PC-9 (cell line): ENCODE measurements at regions of chr14 and their contacts with region 1.

Region 1: GRCh38 chr14:93042968-93043940 is 72.5 kb downstream of the ITPK1 start:
- DNase-seq: peak; percentile 91 to 98
- H3K4me3 ChIP-seq: peak overlapping the region; percentile 38; the same call in 1 of the 2 replicates
- H3K27ac ChIP-seq: peak overlapping the region; percentile 99
- H3K4me1 ChIP-seq: peaks cover 96% of the 10 kb centered on the region
- H3K27me3 ChIP-seq: no peaks in the 10 kb centered on the region
- CTCF ChIP-seq: no peak

Region 2: DNA sequence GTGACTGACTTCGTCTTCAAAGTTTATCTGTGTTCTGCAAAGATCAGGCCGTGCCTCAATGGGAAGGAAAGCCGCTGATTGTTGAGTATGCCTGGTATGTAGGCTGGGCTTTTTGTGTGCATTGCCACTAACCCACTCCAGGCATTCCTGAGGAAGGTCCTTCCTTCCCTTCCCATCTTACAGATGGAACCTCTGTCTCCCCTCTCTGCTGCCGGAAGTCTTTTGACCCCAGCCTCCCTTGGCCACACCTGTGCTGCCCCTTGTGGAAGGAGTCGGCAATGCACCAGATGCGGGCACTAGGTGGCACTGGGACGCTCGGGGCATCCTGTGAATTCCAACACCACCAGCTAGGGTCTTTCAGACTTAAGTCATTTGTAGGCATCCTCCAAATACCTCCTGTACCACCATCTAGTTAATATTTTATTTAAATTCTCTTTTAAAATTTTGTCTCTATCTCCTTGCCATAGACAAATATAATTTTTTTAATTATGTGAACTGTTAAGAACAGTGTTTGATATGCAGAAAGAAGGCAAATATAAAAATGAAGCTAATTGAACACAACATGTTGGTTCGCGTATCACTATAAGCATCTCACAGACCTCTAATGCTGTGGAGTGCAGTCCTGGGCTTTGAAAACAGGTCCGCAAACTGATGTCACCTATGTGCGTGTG is 430.1 kb before region 1 on chr14:
- CTCF ChIA-PET with region 1: no interaction called
- POLR2A ChIA-PET with region 1: no interaction called
- intact Hi-C with region 1: no loop called
- DNase-seq: no peak
- H3K4me3 ChIP-seq: no peak overlapping the region
- H3K27ac ChIP-seq: no peak overlapping the region
- H3K4me1 ChIP-seq: peaks cover 45% of the 10 kb centered on the region
- H3K27me3 ChIP-seq: no peaks in the 10 kb centered on the region
- CTCF ChIP-seq: peak; percentile 87

Region 3: DNA sequence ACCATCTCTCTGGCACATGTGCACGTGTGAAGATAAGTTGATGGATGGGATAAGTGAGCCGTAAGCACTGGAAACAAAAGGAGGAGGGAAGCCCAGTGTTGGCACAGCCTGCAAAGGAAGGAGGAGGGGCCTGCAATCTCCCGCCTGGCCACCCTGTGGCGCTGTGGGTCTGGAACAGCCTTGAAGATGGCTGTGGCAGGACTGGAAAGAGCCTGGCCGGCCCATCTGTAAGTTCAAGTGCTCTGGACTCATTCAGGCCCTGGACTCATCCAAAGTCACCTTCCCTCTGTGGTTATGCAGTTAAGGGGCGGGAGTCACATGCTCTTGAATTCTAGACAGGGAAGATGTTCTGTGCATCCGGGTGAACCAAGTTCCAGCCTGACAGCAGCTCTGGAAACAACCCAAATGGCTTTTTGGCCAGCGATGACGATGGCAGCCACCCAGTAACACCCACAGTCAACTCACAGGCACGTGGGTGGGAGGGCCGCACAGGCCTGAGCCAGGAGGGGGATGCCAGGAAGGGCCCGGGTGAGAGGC is 69.9 kb before region 1 on chr14:
- CTCF ChIA-PET with region 1: no interaction called
- POLR2A ChIA-PET with region 1: no interaction called
- intact Hi-C with region 1: loop called (anchors 2 kb)
- DNase-seq: peak; percentile 52 to 75
- H3K4me3 ChIP-seq: no peak overlapping the region
- H3K27ac ChIP-seq: no peak overlapping the region
- H3K4me1 ChIP-seq: no peaks in the 10 kb centered on the region
- H3K27me3 ChIP-seq: no peaks in the 10 kb centered on the region
- CTCF ChIP-seq: peak; percentile 90

Region 4: GRCh38 chr14:93072674-93073357 is 29.6 kb after region 1 on chr14:
- CTCF ChIA-PET with region 1: interaction called, 3 read pairs
- POLR2A ChIA-PET with region 1: interaction called, 3 read pairs
- intact Hi-C with region 1: loop called (anchors 1 kb)
- DNase-seq: peak; percentile 45 to 58
- H3K4me3 ChIP-seq: no peak overlapping the region
- H3K27ac ChIP-seq: no peak overlapping the region
- H3K4me1 ChIP-seq: peaks cover 17% of the 10 kb centered on the region
- H3K27me3 ChIP-seq: no peaks in the 10 kb centered on the region
- CTCF ChIP-seq: no peak

Region 5: DNA sequence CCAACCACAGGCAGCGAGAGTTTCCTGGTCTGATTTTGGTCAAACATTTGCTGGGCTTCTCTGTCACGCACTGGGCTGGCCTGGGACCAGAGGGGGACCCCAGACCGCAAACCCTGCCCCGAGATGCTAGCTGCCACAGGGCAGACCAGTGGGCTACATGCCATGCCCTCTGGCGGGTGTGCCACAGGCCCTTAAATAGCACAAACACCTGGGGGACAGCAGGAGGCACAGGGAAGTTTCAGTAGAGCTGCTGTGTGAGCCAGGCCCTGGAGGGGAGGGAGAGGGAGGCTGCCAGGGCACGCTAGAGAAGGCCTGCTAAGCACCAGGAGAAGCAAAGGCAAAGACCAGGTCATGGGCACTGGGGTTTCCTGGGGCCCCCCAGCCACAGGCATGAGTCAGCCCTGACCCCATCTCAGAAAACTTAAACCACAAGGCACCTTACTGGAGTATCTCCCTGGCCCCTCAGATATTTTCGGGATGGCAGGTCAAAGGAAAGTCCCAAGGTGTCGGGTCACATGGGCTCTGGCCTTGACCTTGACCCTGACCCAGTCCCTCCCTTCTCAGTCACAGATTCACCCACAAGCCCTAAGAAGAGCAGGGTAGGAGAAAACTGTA is 43.3 kb after region 1 on chr14:
- CTCF ChIA-PET with region 1: no interaction called
- POLR2A ChIA-PET with region 1: no interaction called
- intact Hi-C with region 1: loop called (anchors 1 kb)
- DNase-seq: peak; percentile 70 to 77
- H3K4me3 ChIP-seq: peak overlapping the region; percentile 12; the same call in 1 of the 2 replicates
- H3K27ac ChIP-seq: peak overlapping the region; percentile 99
- H3K4me1 ChIP-seq: peaks cover 57% of the 10 kb centered on the region
- H3K27me3 ChIP-seq: no peaks in the 10 kb centered on the region
- CTCF ChIP-seq: 0 out of 2 replicates have a peak, but pooled peaks have one; percentile 22